Left cardiac atrium (tissue), 4 donors: ENCODE measurements at regions of chr5 and their contacts with region 1.

Region 1: DNA sequence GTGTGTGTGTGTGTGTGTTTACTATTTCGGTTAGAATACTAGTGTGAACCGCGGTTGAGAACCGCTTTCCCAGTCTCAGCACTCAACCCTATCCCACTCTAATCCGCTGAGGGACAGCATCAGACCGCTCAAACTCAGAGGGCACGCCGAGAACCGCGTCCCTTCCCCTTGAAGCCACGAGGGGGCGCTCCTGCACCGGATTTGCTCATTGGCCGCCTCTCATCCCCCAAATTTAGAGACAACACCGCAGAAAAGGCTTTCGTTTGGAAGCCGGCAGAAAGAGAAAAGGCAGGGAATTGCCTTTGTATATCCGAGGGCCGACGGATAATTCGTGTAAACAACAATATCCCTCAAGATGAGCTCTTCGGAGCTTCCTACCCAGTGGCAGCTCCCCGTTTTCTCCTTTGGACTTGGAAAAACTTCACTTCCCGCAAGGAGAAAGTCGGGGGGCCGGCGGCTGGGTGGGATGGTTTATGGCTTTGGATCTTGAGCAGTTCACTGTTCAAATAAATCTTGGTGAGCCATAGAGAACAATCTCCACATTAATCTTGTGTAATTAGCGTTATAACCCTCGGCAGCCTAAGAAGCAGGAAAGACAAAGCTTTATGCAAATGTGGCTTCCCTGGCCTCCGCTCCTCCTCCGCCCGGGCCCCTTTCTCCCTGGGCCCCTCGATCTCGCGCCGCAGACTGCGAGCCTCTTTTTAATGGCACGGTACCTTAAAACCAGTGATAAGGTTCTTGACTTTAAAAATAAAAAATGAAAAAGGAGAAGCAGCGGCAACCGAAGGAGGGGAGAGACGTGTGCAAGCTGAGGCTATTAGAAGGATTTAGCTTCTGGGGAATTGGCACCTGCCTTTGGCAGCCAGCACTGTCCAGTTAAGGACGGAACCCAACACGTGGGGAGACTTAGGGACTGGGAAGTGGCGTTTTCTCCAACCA is 296.8 kb downstream of the PARP8 start:
- DNase-seq: peak; percentile 62
- ATAC-seq: peak; percentile 88 to 89

Region 2: DNA sequence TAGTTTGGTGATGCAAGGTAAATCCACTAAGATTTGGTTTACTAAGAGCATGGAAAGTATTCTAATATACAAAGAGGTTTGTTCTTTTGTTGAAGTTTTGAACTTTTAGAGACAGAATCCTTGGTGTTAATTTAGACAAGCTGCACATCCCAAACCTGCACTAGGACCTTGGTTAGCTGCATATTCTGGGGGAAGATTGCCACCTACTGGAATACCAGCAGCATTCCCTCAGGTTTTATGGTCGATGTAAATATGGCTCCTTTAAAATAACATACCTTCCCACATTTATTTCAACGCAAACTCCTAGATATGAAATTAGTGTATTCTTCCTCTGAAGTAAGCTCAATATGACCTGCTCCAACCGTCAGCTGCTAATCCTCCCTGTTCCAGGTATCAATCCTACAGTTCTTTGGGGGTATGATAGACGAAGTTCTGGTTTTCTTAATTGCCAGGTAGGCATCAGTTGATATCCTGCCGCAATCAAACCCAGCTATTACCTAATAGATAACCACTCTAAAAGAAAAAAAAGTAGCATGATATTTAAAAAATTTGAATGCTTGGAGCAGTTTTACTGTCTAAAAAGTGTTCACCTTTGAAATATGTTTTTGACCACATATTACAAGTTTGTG is 1044.1 kb after region 1 on chr5:
- intact Hi-C with region 1: loop called (anchors 5 kb)
- DNase-seq: no peak
- ATAC-seq: peak in 1 of 2 donors; percentile 45

Region 3: DNA sequence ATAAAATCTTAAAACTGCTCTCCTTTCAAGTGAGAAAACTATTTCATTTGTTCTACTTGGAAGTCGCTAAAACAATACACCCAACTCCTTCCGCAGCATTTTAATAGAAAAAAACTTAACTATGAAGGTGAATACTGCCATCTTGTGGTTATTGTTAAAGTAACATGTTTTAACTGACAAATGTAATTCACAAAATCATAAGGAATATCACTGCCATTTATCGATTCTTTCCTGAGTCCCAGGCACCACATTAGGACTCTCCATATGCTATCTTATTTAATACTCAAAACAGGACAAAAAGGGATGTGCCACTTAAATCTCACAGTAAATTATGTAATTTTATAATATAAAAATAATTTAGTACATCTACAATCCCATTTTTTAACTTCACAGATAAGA is 1694.0 kb after region 1 on chr5:
- intact Hi-C with region 1: loop called (anchors 2 to 10 kb)
- DNase-seq: no peak
- ATAC-seq: no peak